AG04449 (cell line): ENCODE measurements at regions of chr19 and their contacts with region 1.

Region 1: DNA sequence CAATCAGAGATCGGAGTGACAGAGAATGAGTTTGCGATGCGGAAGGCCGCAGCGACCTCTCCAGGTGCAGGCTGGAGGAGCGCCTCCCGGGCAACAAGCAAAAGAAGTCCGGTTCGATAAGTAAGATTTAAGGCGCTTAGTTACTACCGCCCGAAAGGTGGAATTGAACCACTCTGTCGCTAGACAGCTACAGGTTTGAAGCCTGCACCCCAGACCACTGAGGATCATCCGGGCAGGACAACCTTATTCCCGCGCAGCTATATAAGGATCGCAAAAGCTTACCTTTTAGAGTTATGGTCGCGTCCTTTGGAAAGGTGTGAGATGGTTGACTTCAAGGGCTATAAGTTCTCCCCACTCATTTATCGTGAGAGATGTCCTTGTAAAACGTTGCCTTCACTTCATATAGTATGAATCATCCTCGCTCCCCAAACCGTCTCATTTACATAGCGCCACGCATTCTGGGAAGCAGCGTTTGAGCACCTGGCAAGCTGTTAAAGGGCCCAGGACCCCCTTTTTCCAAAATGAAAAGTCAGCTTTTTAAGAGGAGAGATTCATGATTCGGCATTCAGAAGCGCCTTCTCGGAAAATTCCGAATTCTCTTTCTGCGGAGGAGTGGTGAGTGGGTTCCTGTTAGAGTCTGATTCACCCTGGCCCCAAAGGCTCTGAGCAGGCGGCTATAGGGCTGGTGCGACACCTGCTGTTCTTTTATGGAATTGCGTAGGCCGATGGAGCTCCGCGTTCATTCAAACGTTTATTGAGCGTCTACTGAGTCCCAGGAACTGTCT is 10.8 kb downstream of the FOSB start:
- DNase-seq: no peak
- H3K4me3 ChIP-seq: peak overlapping the region; percentile 63
- CTCF ChIP-seq: peak; percentile 87

Region 2: DNA sequence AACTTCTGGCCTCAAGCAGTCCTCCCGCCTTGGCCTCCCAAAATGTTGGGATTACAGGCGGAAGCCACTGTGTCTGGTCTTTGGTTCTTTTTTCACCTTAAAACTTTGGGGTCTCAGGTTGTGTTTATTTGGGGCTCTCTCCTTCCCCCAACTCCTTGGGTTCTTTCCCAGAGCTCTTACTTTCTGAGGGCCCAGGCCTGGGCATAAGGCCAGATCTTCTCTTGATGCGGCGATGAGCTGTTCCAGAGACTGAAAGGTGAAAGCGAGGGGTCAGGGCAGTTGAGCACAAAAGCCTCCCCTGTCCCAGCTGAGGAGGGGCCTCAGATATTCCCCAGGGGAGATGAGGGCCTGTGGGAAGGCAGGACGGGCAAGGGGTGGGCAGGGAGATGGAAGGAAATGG is 65.1 kb before region 1 on chr19:
- CTCF ChIA-PET with region 1: interaction called, 21 read pairs
- POLR2A ChIA-PET with region 1: no interaction called
- DNase-seq: no peak
- H3K4me3 ChIP-seq: no peak overlapping the region
- CTCF ChIP-seq: no peak

Region 3: DNA sequence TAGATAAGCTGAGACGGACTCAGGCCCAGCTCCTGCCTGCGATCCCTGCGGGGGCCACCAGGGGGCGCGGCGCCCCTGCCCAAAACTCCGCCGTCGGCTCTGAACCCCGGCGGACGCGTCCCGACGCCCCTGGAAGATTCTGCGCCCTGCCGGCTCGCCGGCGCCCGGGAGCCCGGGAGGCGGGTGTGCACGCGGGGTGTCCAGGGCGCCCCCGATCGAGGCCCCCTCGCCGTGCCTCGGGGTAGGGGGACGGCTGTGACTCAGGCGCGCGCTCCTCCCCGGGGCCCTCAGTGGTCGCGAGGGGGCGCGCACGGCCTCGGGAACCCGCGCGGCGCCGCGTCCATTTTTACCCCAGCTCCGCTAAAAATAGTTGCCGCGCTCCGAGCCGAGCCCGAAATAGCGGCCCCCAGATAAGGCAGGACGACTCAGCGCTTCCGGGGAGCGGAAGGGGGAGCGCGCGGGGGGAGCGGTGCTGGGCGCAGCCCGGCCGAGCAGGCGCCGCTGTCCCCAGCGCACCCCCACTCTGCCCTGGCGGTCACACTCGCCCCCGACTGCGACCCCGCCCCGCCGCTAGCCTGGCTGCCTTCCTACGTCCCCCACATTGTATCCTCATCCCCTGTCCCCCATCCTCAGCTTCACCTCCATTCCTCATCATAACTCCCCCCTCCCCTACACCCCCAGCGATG is 38.9 kb before region 1 on chr19:
- CTCF ChIA-PET with region 1: interaction called, 773 read pairs
- POLR2A ChIA-PET with region 1: interaction called, 26 read pairs
- DNase-seq: no peak
- H3K4me3 ChIP-seq: peak overlapping the region; percentile 61
- CTCF ChIP-seq: peak; percentile 85

Region 4: GRCh38 chr19:45496349-45496953 is 17.8 kb after region 1 on chr19:
- CTCF ChIA-PET with region 1: interaction called, 99 read pairs
- POLR2A ChIA-PET with region 1: no interaction called
- DNase-seq: no peak
- H3K4me3 ChIP-seq: peak overlapping the region; percentile 69
- CTCF ChIP-seq: no peak

Region 5: GRCh38 chr19:45584332-45585157 is 105.9 kb after region 1 on chr19 and contains the start of gene OPA3:
- CTCF ChIA-PET with region 1: no interaction called
- POLR2A ChIA-PET with region 1: no interaction called
- DNase-seq: peak; percentile 99
- H3K4me3 ChIP-seq: peak within 1 kb of the TSS; percentile 91
- CTCF ChIP-seq: no peak